ENCODE measurements at regions of chr14 and their contacts with region 1.

Region 1: DNA sequence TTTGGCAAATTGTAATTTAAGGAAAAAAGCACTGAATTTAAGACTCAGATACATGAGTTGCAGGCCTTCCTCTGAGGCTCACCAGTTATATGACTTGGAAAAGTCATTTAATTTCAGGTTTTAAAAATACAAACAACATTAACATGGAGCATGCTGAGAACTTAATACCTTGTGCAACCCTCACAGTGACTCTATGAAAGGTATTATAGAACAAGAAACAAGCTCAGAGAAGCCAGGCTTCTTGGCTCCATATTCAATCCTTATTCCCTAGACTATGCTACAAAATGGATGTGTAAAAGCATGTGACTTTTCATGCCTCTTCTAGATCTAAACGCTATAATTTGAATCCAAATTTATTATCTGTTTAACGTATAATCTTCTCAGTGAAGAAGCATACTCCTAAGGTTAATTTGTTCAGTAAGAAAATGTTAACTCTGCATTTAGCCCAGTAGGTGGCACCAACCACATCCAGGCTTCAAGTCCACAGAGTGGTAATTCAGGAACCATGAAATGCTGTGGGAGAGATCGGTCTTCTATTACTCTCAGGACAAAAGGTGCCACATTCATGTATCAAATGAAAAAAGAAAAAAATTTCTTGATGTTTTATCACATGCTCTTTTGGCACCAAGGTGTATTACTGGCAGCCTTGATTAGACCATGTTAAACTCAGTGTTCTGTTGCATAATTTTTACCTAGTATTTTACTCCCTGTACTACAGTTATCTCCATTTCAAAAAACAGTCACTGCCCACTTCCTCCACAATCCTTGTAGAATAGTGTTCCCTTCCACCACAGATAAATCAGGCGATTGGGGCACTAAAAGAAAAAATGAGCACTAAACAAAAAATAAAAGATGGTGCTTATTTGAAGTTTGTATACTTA is 9.3 kb downstream of the CCDC196 start:
- DNase-seq: peak; percentile 52
- ATAC-seq: peak; percentile 83
- H3K4me3 Mint-ChIP-seq: no peak overlapping the region
- H3K27ac Mint-ChIP-seq: no peak overlapping the region
- H3K4me1 Mint-ChIP-seq: peaks cover 19% of the 10 kb centered on the region
- H3K27me3 Mint-ChIP-seq: no peaks in the 10 kb centered on the region

Region 2: DNA sequence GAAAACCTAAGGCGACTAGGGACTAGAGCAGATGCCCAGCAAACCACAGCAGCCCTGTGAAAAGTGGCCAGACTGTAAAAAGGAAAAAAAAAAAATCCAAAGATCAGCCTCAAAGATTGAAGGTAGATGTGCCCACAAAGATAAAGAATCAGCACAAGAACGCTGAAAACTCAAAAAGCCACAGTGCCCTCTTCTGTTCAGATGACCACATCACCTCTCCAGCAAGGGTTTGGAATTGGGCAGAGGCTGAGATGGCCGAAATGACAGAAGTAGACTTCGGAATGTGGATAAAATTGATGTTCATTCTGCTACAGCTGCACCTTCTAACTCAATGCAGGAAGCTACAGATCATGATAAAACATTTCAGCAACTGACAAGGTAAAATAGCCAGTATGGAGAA is 166.9 kb after region 1 on chr14:
- CTCF ChIA-PET with region 1: interaction called, 3 read pairs
- POLR2A ChIA-PET with region 1: no interaction called
- intact Hi-C with region 1: loop called in 1 of 2 experiments (anchors 5 kb)
- DNase-seq: peak; percentile 9
- ATAC-seq: no peak
- H3K4me3 Mint-ChIP-seq: no peak overlapping the region
- H3K27ac Mint-ChIP-seq: no peak overlapping the region
- H3K4me1 Mint-ChIP-seq: no peaks in the 10 kb centered on the region
- H3K27me3 Mint-ChIP-seq: no peaks in the 10 kb centered on the region

Region 3: DNA sequence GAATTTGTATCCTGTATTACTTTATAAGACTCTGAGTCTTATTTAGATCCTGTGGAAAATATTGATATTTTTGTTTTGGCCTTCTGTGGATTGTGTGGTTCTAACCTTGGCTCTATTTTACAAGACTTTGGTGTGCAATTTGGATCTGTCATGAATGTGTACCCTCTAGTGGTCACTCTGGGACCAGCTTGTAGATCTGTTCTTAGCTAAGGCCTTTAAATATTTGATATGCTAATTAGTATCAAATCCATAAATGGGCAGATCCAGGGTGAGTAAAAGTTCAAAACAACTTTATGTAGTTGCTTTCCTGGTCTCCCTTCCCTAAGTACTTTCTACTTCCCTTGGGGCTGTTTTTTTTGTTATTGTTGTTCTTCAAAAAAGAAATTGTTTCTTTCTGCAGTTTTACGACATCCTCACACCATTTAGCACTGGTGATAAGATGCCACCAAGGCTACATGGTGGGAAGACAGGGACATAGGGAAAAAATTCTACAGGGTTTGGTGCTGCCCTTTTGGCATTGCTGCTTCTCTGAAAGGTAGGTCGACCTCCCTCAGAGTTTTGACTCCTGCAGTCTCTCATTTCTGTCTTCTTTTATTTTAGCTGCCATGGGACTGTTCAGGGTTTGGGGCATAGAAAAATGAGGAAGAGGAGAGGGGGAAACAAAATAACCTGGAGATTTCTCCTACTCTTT is 251.0 kb after region 1 on chr14:
- CTCF ChIA-PET with region 1: no interaction called
- POLR2A ChIA-PET with region 1: no interaction called
- intact Hi-C with region 1: loop called (anchors 1 to 5 kb)
- DNase-seq: peak; percentile 7
- ATAC-seq: no peak
- H3K4me3 Mint-ChIP-seq: no peak overlapping the region
- H3K27ac Mint-ChIP-seq: no peak overlapping the region
- H3K4me1 Mint-ChIP-seq: peaks cover 2% of the 10 kb centered on the region
- H3K27me3 Mint-ChIP-seq: no peaks in the 10 kb centered on the region

Measured in activated CD4-positive, alpha-beta T cell treated with anti-CD3 and anti-CD28 coated beads for 36 hours (primary cell).